GM10248 (cell line): ENCODE measurements at regions of chr14 and their contacts with region 1.

Region 1: GRCh38 chr14:75301666-75302325 is 23.2 kb downstream of the FOS start:
- DNase-seq: no peak
- CTCF ChIP-seq: no peak

Region 2: GRCh38 chr14:75132382-75133086 is 169.3 kb before region 1 on chr14:
- CTCF ChIA-PET with region 1: interaction called, 111 read pairs
- POLR2A ChIA-PET with region 1: interaction called, 4 read pairs
- DNase-seq: peak; percentile 40
- CTCF ChIP-seq: peak; percentile 72

Region 3: DNA sequence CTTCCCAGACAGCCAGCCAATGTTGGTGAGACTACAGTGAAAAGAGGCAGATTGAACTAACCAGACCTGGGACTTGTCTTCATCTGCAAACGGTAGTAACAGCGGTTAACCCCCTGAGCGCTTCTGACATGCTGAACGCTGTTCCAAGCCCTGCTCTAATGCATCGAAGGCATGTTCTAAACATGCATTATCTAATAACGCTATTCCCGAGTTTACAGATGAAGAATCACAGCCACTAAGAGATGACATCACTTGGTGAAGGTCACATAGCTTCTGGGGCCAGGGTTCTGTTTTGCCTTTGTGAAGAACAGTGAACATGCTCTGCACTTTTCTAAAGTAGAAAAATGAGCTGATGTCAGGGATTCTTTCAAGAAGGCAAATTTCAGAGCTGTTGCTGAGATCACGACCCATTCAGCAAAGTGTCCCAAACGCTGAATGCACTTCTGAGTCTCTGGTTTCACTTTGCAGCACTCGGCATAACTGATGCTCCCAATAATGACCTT is 32.8 kb after region 1 on chr14:
- CTCF ChIA-PET with region 1: no interaction called
- POLR2A ChIA-PET with region 1: no interaction called
- DNase-seq: peak; percentile 32
- CTCF ChIP-seq: no peak

Region 4: DNA sequence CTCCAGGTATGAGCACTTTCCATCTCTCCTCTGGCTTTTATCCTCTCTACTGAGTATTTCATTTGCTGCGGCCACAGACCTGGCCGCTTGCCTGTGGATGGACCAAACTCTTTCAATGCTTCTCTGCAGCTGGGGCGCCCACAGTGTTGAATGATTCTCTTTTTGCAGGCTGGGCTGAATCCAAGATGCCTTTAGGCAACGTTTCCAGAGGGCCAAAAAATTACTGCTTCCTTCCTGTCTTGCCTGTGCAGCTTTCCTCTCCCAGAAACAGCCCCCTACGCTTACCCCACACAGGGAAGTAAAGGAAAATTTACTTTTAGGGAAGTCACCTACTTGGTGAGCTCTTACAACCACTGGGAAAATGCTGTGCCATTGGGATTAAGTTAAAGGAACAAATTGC is 70.5 kb after region 1 on chr14:
- CTCF ChIA-PET with region 1: no interaction called
- POLR2A ChIA-PET with region 1: no interaction called
- DNase-seq: no peak
- CTCF ChIP-seq: no peak